ENCODE measurements at regions of chr1 and their contacts with region 1.

Region 1: GRCh38 chr1:218330043-218330623 is 15.0 kb upstream of the TGFB2 start:
- DNase-seq: no peak
- ATAC-seq: peak in 3 of 4 donors; percentile 37 to 56 (median 55)
- H3K4me3 ChIP-seq: no peak overlapping the region
- H3K27ac ChIP-seq: no peak overlapping the region
- H3K4me1 ChIP-seq: peaks cover 0 to 4% (median 0%) of the 10 kb centered on the region in 12 donors
- H3K27me3 ChIP-seq: no peaks in the 10 kb centered on the region
- CTCF ChIP-seq: peak; percentile 59 to 79 (median 70)
- POLR2A ChIP-seq: no peak

Region 2: DNA sequence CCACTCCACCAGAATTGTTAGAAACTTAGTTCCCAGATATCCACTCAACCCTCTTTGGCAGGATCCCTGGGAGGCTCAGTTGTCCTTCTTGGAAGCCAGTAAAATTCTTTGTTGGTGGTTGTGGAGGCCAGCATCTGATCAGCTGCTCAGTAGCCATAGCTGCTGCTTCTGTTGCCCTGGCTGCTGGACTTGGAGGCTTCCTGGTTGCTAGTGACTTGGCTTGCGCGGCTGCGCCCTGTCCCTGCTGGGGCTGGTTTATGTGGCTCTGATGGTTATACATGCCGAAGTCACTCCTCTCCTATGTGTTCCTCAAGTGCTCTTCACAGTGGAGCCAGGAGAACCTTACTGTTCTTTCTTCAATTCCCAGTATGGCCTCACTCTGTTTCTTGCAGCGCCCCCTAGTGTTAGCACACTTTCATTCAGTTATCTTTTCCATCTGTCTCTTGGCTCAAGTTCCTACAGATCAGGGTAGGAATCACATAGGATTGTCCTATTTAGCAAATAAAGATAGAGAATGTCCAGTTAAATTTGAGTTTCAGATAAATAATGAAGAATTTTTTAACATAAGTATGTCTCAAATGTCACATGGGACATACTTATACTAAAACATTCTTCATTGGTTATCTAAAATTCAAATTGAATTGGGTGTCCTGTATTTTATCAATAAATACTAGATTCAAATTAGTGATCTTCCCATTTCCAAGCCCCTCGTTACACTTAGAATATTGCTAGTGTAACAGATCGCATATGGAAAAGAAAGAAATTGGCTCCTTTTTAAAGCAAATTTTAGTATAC is 191.4 kb after region 1 on chr1:
- intact Hi-C with region 1: loop called in 3 of 10 experiments (anchors 5 to 10 kb)
- DNase-seq: peak in 4 of 5 donors; percentile 28 to 48 (median 32)
- ATAC-seq: no peak
- H3K4me3 ChIP-seq: no peak overlapping the region
- H3K27ac ChIP-seq: no peak overlapping the region
- H3K4me1 ChIP-seq: no peaks in the 10 kb centered on the region
- H3K27me3 ChIP-seq: no peaks in the 10 kb centered on the region
- CTCF ChIP-seq: peak; percentile 48 to 79 (median 68)
- POLR2A ChIP-seq: no peak

Region 3: GRCh38 chr1:219209578-219209977 is 879.4 kb after region 1 on chr1:
- intact Hi-C with region 1: loop called in 1 of 10 experiments (anchors 10 kb)
- DNase-seq: no peak
- ATAC-seq: peak in 3 of 4 donors; percentile 68 to 81 (median 80)
- H3K4me3 ChIP-seq: no peak overlapping the region
- H3K27ac ChIP-seq: peak overlapping the region in 1 of 12 donors; percentile 25
- H3K4me1 ChIP-seq: peaks cover 0 to under 1% (median 0%) of the 10 kb centered on the region in 12 donors
- H3K27me3 ChIP-seq: no peaks in the 10 kb centered on the region
- CTCF ChIP-seq: no peak
- POLR2A ChIP-seq: no peak

Region 4: GRCh38 chr1:219416594-219417238 is 1086.6 kb after region 1 on chr1:
- intact Hi-C with region 1: loop called in 7 of 10 experiments (anchors 5 to 10 kb)
- DNase-seq: peak in 3 of 5 donors; percentile 39 to 56 (median 54)
- ATAC-seq: peak in 2 of 4 donors; percentile 62 to 66
- H3K4me3 ChIP-seq: no peak overlapping the region
- H3K27ac ChIP-seq: no peak overlapping the region
- H3K4me1 ChIP-seq: peaks cover 0 to 19% (median 8%) of the 10 kb centered on the region in 12 donors
- H3K27me3 ChIP-seq: no peaks in the 10 kb centered on the region
- CTCF ChIP-seq: peak; percentile 37 to 72 (median 58)
- POLR2A ChIP-seq: no peak

Region 5: DNA sequence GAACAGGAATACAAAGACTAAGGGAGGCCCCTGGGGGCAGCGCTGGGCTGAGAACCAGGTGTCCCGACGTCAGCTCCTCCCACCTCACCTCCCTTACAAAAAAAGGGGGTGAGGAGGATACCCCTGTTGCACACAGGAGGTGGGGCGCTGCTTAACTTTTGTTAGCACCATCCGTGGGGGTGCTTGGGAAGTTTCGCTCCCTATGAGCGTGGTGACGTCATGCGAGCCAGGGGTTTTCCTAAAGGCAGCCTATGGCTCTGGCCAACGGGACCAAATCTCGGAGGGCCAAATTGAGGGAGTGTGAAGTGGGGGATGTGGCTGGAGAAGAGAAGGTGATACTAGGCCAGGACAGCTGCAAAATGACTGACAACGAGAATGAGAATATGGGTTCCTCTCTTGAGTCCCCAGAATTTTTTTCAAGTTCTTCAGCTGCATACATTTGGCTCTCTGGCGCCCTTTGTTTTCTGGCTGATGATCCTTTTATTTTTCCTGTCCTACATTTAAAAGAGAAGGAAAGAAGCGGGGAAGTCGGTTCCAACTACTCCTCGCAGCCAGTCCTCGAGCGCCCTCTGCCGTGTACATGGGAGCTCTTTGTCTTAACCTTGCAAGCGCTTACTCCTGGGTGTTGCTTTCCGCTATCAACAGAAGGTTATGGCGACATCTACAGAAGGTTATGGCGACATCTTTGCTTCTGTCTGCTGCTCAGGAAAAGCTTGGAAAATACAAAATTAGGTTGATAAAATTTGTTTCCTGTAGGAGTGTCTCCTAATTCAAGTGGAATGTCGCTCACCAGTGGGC is 1330.7 kb after region 1 on chr1:
- intact Hi-C with region 1: loop called in 8 of 10 experiments (anchors 5 to 10 kb)
- DNase-seq: peak; percentile 87 to 95 (median 89)
- ATAC-seq: peak; percentile 70 to 91 (median 88)
- H3K4me3 ChIP-seq: peak overlapping the region in 8 of 12 donors; percentile 13 to 35 (median 28)
- H3K27ac ChIP-seq: peak overlapping the region in 3 of 12 donors; percentile 3 to 8 (median 6)
- H3K4me1 ChIP-seq: peaks cover 0 to 31% (median 13%) of the 10 kb centered on the region in 12 donors
- H3K27me3 ChIP-seq: peaks cover 0 to 2% (median 0%) of the 10 kb centered on the region in 9 donors
- CTCF ChIP-seq: peak; percentile 68 to 90 (median 79)
- POLR2A ChIP-seq: no peak

Region 6: GRCh38 chr1:219812491-219813203 is 1482.5 kb after region 1 on chr1:
- intact Hi-C with region 1: loop called (anchors 2 to 10 kb)
- DNase-seq: peak in 2 of 5 donors; percentile 22 to 40
- ATAC-seq: peak in 3 of 4 donors; percentile 78 to 92 (median 82)
- H3K4me3 ChIP-seq: no peak overlapping the region
- H3K27ac ChIP-seq: no peak overlapping the region
- H3K4me1 ChIP-seq: peaks cover 0 to 9% (median 0%) of the 10 kb centered on the region in 12 donors
- H3K27me3 ChIP-seq: peaks cover 0 to 3% (median 0%) of the 10 kb centered on the region in 9 donors
- CTCF ChIP-seq: peak; percentile 57 to 85 (median 82)
- POLR2A ChIP-seq: no peak

Measured in heart left ventricle (tissue), 16 donors.